ENCODE measurements at regions of chr10 and their contacts with region 1.

Region 1: GRCh38 chr10:101467286-101467770 is 113.4 kb downstream of the BTRC start:
- DNase-seq: peak; percentile 83
- H3K4me3 Mint-ChIP-seq: no peak overlapping the region
- H3K27ac Mint-ChIP-seq: no peak overlapping the region
- H3K4me1 Mint-ChIP-seq: no peaks in the 10 kb centered on the region
- H3K27me3 Mint-ChIP-seq: no peaks in the 10 kb centered on the region
- CTCF ChIP-seq: peak; percentile 72

Region 2: GRCh38 chr10:101161494-101162299 is 305.6 kb before region 1 on chr10:
- CTCF ChIA-PET with region 1: no interaction called
- POLR2A ChIA-PET with region 1: no interaction called
- intact Hi-C with region 1: loop called (anchors 1 kb)
- DNase-seq: peak; percentile 83
- H3K4me3 Mint-ChIP-seq: peak overlapping the region; percentile 63
- H3K27ac Mint-ChIP-seq: no peak overlapping the region
- H3K4me1 Mint-ChIP-seq: peaks cover 19% of the 10 kb centered on the region
- H3K27me3 Mint-ChIP-seq: peaks cover 33% of the 10 kb centered on the region
- CTCF ChIP-seq: peak; percentile 91

Region 3: DNA sequence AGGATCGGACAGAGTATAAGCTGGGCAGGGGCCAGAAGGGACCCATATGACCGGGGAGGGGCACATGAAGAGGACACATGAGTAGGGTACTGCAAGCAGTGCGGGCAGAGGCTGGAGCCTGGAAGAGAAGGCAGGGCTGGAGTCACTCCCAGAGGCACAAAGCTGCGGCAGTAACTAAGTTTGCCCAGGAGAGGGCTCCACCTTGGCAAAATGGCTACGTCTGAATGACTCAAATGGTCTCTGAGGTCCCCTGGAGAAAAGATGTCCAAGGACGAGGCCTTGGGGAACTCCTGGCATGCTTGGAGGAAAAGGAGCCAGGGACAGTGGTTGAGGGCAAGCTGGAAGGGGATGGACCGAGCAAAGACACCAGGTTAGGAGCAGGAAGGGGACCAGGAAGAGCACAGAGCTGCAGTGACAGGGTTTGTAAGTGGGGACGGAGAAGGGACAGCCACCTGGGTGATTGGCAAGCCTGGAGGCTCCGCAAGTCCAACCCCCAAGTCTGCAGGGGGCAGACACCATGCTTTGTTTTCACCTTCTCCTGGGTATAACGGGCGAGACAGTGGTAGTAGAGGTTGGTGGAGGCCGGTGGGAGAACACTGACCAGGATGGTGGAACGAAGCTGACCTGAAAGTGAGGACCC is 195.0 kb before region 1 on chr10:
- CTCF ChIA-PET with region 1: interaction called, 12 read pairs
- POLR2A ChIA-PET with region 1: no interaction called
- intact Hi-C with region 1: no loop called
- DNase-seq: peak; percentile 77
- H3K4me3 Mint-ChIP-seq: no peak overlapping the region
- H3K27ac Mint-ChIP-seq: no peak overlapping the region
- H3K4me1 Mint-ChIP-seq: peaks cover 19% of the 10 kb centered on the region
- H3K27me3 Mint-ChIP-seq: no peaks in the 10 kb centered on the region
- CTCF ChIP-seq: peak; percentile 73

Region 4: GRCh38 chr10:101441541-101442455 is 25.5 kb before region 1 on chr10:
- CTCF ChIA-PET with region 1: interaction called, 17 read pairs
- POLR2A ChIA-PET with region 1: interaction called, 4 read pairs
- intact Hi-C with region 1: no loop called
- DNase-seq: peak; percentile 75
- H3K4me3 Mint-ChIP-seq: no peak overlapping the region
- H3K27ac Mint-ChIP-seq: no peak overlapping the region
- H3K4me1 Mint-ChIP-seq: peaks cover 6% of the 10 kb centered on the region
- H3K27me3 Mint-ChIP-seq: no peaks in the 10 kb centered on the region
- CTCF ChIP-seq: peak; percentile 66

Region 5: DNA sequence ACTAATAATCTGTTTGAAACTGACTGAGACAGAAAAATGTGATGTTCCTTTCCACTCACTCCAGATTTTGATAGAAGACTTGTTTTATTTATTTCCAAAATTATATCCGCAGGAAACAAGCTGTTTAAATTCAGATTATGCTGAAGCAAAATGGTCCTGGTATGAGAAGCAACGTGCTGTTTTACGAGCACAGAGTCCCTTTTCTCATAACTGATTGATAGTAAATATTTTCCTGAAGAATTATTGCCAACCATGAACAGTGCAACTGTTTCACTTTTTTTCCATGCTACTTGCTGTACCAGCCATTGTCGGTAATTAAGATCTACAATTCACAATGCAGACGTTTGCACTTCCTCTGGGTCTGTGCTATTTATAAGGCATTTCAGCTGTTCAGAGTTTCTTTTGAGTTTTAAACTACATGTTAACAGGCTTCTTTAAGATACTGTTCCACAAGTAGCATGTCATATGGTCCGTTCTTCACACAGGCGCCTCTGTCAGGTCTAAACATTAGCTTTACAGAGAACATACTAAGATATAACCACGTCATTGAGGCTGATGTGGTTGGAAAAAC is 16.9 kb after region 1 on chr10:
- CTCF ChIA-PET with region 1: interaction called, 16 read pairs
- POLR2A ChIA-PET with region 1: no interaction called
- intact Hi-C with region 1: no loop called
- DNase-seq: no peak
- H3K4me3 Mint-ChIP-seq: no peak overlapping the region
- H3K27ac Mint-ChIP-seq: no peak overlapping the region
- H3K4me1 Mint-ChIP-seq: peaks cover 5% of the 10 kb centered on the region
- H3K27me3 Mint-ChIP-seq: no peaks in the 10 kb centered on the region
- CTCF ChIP-seq: no peak

Region 6: GRCh38 chr10:101512738-101513137 is 45.4 kb after region 1 on chr10:
- CTCF ChIA-PET with region 1: interaction called, 11 read pairs
- POLR2A ChIA-PET with region 1: no interaction called
- intact Hi-C with region 1: no loop called
- DNase-seq: peak; percentile 52
- H3K4me3 Mint-ChIP-seq: no peak overlapping the region
- H3K27ac Mint-ChIP-seq: no peak overlapping the region
- H3K4me1 Mint-ChIP-seq: no peaks in the 10 kb centered on the region
- H3K27me3 Mint-ChIP-seq: no peaks in the 10 kb centered on the region
- CTCF ChIP-seq: no peak

Region 7: DNA sequence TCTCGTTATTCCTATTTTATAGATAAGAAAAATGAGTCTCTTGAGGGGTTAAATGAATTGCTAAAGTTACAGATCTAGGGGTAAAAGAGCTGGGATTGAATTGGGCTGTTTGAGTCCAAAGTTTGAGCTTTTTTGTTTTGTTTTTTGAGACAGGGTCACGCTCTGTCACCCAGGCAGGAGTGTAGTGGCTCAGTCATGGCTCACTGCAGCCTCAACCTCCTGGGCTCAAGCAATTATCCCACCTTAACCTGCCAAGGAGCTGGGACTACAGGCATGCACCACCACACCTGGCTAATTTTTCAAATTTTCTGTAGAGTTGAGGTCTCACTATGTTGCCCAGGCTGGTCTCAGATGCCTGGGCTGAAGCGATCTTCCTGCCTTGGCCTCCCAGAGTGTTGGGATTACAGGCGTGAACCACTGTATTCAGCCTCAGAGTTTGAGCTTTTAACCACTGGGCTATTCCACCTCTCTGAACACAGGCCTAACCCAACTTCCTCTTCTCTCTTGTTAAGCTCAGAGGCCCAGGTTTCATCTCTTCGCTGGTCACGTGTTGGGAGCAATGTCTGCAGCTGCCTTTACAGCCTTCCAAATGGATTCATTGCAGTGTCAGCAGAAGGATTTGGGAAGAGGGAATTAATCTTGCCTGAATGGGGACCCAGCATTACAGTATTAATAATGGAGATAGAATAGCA is 1044.4 kb after region 1 on chr10:
- CTCF ChIA-PET with region 1: no interaction called
- POLR2A ChIA-PET with region 1: no interaction called
- intact Hi-C with region 1: no loop called
- DNase-seq: no peak
- H3K4me3 Mint-ChIP-seq: no peak overlapping the region
- H3K27ac Mint-ChIP-seq: no peak overlapping the region
- H3K4me1 Mint-ChIP-seq: no peaks in the 10 kb centered on the region
- H3K27me3 Mint-ChIP-seq: no peaks in the 10 kb centered on the region
- CTCF ChIP-seq: no peak

Measured in MCF 10A (cell line).